GM18951 (cell line): ENCODE measurements at regions of chr17 and their contacts with region 1.

Region 1: GRCh38 chr17:30074730-30075129 is 41.9 kb upstream of the NSRP1 start:
- POLR2A ChIP-seq: no peak

Region 2: GRCh38 chr17:29645515-29646051 is 429.1 kb before region 1 on chr17:
- in situ Hi-C with region 1: no loop called
- POLR2A ChIP-seq: no peak

Region 3: DNA sequence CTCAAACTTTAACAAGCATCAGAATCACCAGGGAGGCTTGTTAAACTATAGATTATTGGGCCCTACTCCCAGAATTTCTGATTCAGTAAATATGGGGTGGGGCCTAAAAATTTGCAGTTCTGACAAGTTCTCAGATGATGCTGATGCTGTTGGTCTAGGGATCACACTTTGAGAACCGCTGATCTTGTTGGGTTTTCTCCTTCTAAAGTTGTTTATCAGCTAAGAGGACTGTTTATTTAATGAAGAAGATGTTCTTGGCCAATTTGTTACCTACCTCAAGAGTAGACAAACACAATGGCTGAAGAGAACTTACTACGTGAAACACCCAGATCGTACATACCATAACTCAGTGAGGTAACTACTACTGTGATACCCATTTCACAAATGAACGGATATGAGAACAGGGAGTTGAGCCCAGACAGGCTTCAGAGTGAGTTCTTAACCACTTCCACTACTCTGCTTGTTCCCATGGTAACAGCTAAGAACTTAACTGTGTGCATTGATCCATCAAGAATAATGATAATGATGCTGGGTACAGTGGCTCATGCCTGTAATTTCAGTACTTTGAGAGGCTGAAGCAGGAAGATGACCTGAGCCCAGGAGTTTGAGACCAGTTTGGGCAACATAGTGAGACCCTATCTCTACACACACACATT is 43.4 kb before region 1 on chr17:
- in situ Hi-C with region 1: loop called (anchors 5 kb)
- POLR2A ChIP-seq: no peak

Region 4: GRCh38 chr17:30256756-30257506 is 182.2 kb after region 1 on chr17:
- in situ Hi-C with region 1: no loop called
- POLR2A ChIP-seq: no peak